ENCODE measurements at regions of chr12 and their contacts with region 1.

Region 1: DNA sequence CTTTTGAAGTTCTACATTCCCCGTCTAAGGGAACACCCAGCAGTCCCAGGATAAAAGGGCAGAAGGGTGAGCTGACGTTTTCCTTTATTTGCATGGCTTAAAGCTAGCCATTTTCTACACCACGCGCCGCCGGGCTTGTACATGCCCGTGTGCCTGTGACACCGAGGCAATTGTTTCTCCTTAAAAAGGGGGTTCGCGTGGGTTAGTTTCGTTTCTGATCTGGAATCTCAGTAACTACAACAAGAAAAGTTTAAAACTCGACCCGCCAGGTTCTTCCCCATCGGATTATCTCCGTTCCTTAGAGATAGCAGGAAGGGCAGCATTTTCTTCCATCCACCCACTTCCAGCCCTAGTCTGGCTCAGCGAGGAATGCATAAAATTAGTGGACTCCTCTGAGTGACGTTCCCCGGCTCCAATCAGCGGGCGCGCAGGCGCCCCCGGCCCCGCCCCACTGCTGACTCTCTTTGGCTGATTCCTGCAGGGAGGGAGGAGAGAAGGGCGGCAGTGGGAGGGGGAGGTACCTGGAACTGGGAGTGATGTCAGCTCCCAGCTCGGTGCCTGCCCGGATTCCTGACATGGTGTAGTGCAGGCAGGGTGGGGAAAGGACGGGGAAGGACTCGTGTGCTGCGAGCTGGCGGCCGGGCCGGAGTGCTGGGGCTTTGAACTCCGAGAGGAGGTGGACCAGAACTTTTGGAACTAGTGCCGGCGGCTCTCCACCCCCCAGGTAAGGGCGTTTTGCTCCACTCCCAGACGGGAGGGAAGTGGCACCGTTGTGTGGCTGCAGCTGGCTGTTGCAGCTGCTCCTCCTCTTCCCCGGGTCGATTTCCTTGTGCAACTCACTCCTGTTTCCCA is at the start of gene PPFIBP1:
- DNase-seq: peak; percentile 99
- H3K4me3 ChIP-seq: peak within 1 kb of the TSS; percentile 84 to 94 (median 86)
- H3K27ac ChIP-seq: peak within 1 kb of the TSS; percentile 88
- H3K4me1 ChIP-seq: peaks cover 18% of the 10 kb centered on the region
- H3K27me3 ChIP-seq: no peaks in the 10 kb centered on the region
- CTCF ChIP-seq: peak; percentile 30 to 65
- total RNA-seq, gene PPFIBP1: 114 to 136 TPM

Region 2: DNA sequence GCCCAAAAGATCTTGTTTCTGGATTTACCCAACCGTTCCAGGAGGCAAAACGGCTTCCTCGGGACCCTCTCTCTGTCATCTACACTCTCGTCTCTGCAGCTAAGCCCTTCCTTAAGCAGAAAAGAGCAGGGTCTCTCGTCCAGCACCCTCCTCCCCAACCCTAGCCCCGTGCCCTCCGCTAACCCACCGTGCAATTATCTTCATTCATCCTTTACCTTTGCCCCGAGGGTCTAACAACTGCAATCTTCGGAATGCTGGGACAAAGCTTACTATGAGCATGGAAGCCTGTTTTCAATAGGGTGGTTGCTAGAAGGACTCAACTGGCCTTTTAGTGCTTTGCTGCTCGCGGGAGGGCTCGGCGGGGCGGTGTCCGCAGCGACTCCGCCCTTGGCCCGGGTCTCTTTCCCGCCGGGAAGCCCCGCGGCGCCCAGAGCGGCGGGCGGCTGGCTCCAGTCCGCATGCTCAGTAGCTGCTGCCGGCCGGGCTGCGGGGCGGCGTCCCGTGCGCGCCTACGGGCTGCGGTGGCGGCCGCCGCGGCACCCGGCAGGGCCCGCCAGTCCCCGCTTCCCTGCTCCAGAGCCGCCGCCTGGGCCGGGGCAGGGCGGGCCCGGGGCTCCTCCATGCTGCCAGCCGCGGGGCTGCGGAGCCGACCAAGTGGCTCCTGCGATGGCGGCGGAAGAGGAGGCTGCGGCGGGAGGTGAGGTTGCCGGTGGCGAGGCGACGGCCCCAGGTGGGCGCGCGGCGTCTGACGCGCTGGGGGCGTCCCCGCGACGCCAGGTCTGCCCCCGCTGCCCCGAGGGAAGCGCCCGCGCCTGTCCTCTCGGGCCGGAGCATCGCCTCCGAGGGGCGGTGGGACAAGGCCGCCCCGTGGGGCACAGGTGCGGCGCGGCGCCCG is 191.2 kb before region 1 on chr12 and contains the start of gene BMAL2:
- CTCF ChIA-PET with region 1: no interaction called
- dilution Hi-C with region 1: no loop called
- in situ Hi-C with region 1: no loop called
- intact Hi-C with region 1: loop called (anchors 5 kb)
- DNase-seq: peak; percentile 40
- H3K4me3 ChIP-seq: peak within 1 kb of the TSS; percentile 66 to 82 (median 80)
- H3K27ac ChIP-seq: peak within 1 kb of the TSS; percentile 98
- H3K4me1 ChIP-seq: peaks cover 46% of the 10 kb centered on the region
- H3K27me3 ChIP-seq: no peaks in the 10 kb centered on the region
- CTCF ChIP-seq: no peak
- total RNA-seq, gene BMAL2: 8.8 to 51.6 TPM

Region 3: DNA sequence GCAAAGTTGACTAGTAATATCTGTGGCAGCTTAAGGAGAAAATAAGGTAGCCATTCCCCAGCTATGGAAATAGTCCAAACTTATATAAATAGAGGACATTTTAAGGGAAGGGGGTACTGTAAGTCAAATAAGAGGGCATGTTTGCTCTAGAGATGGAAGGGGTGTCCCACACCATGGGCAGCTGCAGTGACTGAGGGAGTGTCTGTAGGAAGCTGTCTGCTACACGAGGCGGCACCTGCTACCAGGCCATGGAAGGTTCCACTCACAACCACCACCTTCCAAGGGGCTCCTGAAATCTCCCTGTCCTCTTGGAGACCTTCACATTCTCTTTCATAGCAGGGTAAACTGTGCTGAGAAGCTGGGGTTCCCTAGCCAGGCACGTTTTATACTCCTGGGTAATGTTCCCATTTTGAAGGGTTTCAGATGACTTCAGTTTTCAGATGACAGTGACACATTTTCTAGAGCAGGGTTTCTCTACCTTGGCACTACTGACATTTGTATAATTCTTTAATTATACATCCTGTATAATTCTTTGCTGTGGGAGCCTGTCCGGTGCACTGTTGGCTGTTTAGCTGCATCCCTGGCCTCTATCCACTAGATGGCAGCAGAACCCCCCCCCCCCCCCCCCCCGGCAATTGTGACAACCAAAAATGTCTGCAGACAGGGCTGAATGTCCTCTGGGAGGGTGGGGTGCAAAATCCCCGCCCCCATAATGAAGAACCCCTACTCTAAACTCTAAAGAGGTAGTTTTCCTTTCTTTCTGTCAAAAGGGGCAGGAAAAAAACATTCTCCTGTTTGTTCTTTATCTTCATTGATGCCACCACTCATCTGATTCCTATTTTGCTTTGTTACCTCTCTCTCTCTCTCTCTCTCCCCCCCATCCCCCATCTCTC is 88.9 kb before region 1 on chr12:
- CTCF ChIA-PET with region 1: interaction called, 5 read pairs
- dilution Hi-C with region 1: no loop called
- in situ Hi-C with region 1: no loop called
- intact Hi-C with region 1: loop called (anchors 1 kb)
- DNase-seq: no peak
- H3K4me3 ChIP-seq: no peak overlapping the region
- H3K27ac ChIP-seq: no peak overlapping the region
- H3K4me1 ChIP-seq: no peaks in the 10 kb centered on the region
- H3K27me3 ChIP-seq: no peaks in the 10 kb centered on the region
- CTCF ChIP-seq: peak; percentile 34 to 68

Region 4: GRCh38 chr12:27549801-27550652 is 26.2 kb after region 1 on chr12:
- CTCF ChIA-PET with region 1: interaction called, 12 read pairs
- dilution Hi-C with region 1: no loop called
- in situ Hi-C with region 1: no loop called
- intact Hi-C with region 1: no loop called
- DNase-seq: peak; percentile 93
- H3K4me3 ChIP-seq: peak overlapping the region; percentile 25 to 28 (median 25)
- H3K27ac ChIP-seq: peak overlapping the region; percentile 95
- H3K4me1 ChIP-seq: peaks cover 83% of the 10 kb centered on the region
- H3K27me3 ChIP-seq: no peaks in the 10 kb centered on the region
- CTCF ChIP-seq: no peak

Region 5: GRCh38 chr12:27627123-27627835 is 103.4 kb after region 1 on chr12:
- CTCF ChIA-PET with region 1: interaction called, 3 read pairs
- dilution Hi-C with region 1: no loop called
- in situ Hi-C with region 1: no loop called
- intact Hi-C with region 1: loop called (anchors 2 kb)
- DNase-seq: peak; percentile 78
- H3K4me3 ChIP-seq: peak overlapping the region in 1 of 3 experiments; percentile 8
- H3K27ac ChIP-seq: peak overlapping the region; percentile 85
- H3K4me1 ChIP-seq: peaks cover 49% of the 10 kb centered on the region
- H3K27me3 ChIP-seq: no peaks in the 10 kb centered on the region
- CTCF ChIP-seq: peak in 1 of 2 donors; percentile 3

Region 6: GRCh38 chr12:27652174-27652763 is 128.4 kb after region 1 on chr12:
- CTCF ChIA-PET with region 1: no interaction called
- dilution Hi-C with region 1: no loop called
- in situ Hi-C with region 1: no loop called
- intact Hi-C with region 1: loop called (anchors 1 kb)
- DNase-seq: peak; percentile 67
- H3K4me3 ChIP-seq: no peak overlapping the region
- H3K27ac ChIP-seq: no peak overlapping the region
- H3K4me1 ChIP-seq: peaks cover 10% of the 10 kb centered on the region
- H3K27me3 ChIP-seq: no peaks in the 10 kb centered on the region
- CTCF ChIP-seq: peak; percentile 78 to 84